Heart right ventricle (tissue), 16 donors: ENCODE measurements at regions of chr1 and their contacts with region 1.

Region 1: GRCh38 chr1:111848852-111849545 is 93.3 kb downstream of the DDX20 start:
- DNase-seq: no peak
- ATAC-seq: no peak
- H3K4me3 ChIP-seq: no peak overlapping the region
- H3K27ac ChIP-seq: peak overlapping the region in 1 of 10 donors; percentile 65
- H3K4me1 ChIP-seq: peaks cover 0 to 61% (median 38%) of the 10 kb centered on the region in 9 donors
- H3K27me3 ChIP-seq: no peaks in the 10 kb centered on the region
- CTCF ChIP-seq: no peak

Region 2: DNA sequence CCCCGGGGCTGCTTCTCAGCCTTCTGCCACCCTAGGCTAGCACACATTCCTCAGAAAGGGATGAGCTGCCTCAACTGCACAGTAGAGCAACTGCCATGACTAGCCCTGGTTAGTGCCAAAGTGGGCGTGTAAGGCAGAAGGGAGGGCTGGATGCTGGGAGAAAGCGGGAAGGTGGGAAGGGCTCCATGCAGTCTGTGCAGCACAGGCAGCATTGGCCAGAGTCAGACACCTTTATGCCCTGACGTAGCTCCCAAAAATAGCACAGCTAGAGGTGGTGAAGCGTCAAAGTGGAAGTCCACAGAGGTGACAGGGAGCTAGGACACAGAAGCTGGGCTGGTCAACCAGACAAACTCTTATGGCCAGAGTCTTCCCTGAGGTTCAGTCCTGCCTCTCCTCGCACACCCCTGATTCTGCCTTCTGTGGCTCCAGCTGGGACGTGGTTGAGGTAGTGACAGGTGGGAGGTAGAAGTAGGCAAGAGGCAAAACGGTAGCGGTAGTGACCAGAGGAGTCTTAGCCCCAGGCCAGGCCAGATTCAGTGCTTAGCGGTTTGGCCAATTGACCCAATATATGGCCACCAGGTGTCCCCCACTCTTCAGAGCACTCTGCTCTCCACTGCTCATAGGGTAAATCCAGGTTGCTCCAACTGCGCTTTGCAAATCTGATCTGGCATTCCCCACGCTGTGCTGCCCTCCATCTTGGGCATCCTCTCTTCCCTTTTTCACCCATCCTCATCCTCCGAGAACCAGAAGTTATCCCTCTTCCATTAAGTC is 47.7 kb before region 1 on chr1:
- intact Hi-C with region 1: loop called in 1 of 10 experiments (anchors 5 kb)
- DNase-seq: peak; percentile 37 to 65
- ATAC-seq: peak; percentile 85 to 94 (median 91)
- H3K4me3 ChIP-seq: no peak overlapping the region
- H3K27ac ChIP-seq: peak overlapping the region; percentile 38 to 80 (median 64)
- H3K4me1 ChIP-seq: peaks cover 0 to 27% (median 9%) of the 10 kb centered on the region in 9 donors
- H3K27me3 ChIP-seq: no peaks in the 10 kb centered on the region
- CTCF ChIP-seq: peak in 6 of 9 donors; percentile 6 to 33 (median 21)